K562 (cell line): ENCODE measurements at regions of chr6 and their contacts with region 1.

Region 1: GRCh38 chr6:146598772-146599405 is at the start of gene ADGB:
- DNase-seq: peak; percentile 69 to 76 (median 76)
- ATAC-seq: peak; percentile 99
- H3K4me3 ChIP-seq: peak within 1 kb of the TSS; percentile 13; the same call in 1 of the 2 replicates
- H3K27ac ChIP-seq: no peak within 1 kb of the TSS
- H3K4me1 ChIP-seq: peaks cover 0 to 7% of the 10 kb centered on the region in 2 experiments; a peak in 3 of 5 replicates
- H3K27me3 ChIP-seq: peaks cover 0 to 10% of the 10 kb centered on the region in 2 experiments; a peak in 1 of 5 replicates
- CTCF ChIP-seq: no peak
- EP300 ChIP-seq: no peak
- POLR2A ChIP-seq: no peak
- RAD21 ChIP-seq: 0 out of 4 replicates have a peak, but pooled peaks have one; percentile 7 to 16
- polyA plus RNA-seq, gene ADGB: not detected

Region 2: DNA sequence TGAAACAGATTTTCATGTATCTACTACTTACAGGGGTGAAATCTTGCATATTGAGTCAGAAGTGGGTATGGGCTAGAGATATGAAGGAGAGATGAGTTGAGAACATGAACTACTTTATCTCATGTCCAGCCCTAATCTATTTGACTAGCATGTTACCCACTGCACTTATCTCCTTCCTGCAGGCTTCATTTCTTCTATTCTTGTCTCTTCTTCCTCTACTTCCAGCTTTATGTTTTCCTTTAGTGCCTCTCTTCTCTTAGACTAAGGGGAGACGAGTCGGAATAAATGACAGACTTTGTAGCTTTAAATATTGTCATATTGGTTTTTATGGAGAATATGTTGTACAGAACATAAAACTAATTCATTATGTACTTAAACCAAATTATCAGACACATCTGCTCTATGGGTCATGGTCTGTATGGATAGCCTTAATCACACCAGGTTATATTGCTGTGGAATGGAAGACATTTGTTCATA is 50.0 kb before region 1 on chr6:
- CTCF ChIA-PET with region 1: no interaction called
- POLR2A ChIA-PET with region 1: no interaction called
- in situ Hi-C with region 1: no loop called
- intact Hi-C with region 1: loop called (anchors 2 kb)
- DNase-seq: peak; percentile 39 to 74 (median 62)
- ATAC-seq: peak; percentile 72
- H3K4me3 ChIP-seq: no peak overlapping the region
- H3K27ac ChIP-seq: no peak overlapping the region
- H3K4me1 ChIP-seq: peaks cover 5 to 15% of the 10 kb centered on the region in 2 experiments
- H3K27me3 ChIP-seq: no peaks in the 10 kb centered on the region
- CTCF ChIP-seq: no peak
- EP300 ChIP-seq: peak; percentile 97
- POLR2A ChIP-seq: no peak
- RAD21 ChIP-seq: peak in 1 of 2 experiments; percentile 17; a peak in 2 of 4 replicates

Region 3: GRCh38 chr6:146664871-146665351 is 66.0 kb after region 1 on chr6:
- CTCF ChIA-PET with region 1: no interaction called
- POLR2A ChIA-PET with region 1: no interaction called
- in situ Hi-C with region 1: loop called (anchors 5 kb)
- intact Hi-C with region 1: no loop called
- DNase-seq: no peak
- ATAC-seq: no peak
- H3K4me3 ChIP-seq: no peak overlapping the region
- H3K27ac ChIP-seq: no peak overlapping the region
- H3K4me1 ChIP-seq: no peaks in the 10 kb centered on the region
- H3K27me3 ChIP-seq: no peaks in the 10 kb centered on the region
- CTCF ChIP-seq: no peak
- EP300 ChIP-seq: no peak
- POLR2A ChIP-seq: no peak
- RAD21 ChIP-seq: no peak